ENCODE measurements at regions of chr11 and their contacts with region 1.

Region 1: GRCh38 chr11:19060629-19061028 is at the start of gene MRGPRX2:
- DNase-seq: no peak
- H3K4me3 ChIP-seq: no peak within 1 kb of the TSS
- H3K4me3 Mint-ChIP-seq: peak within 1 kb of the TSS in 6 of 7 donors; percentile 30 to 85 (median 64)
- H3K27ac ChIP-seq: no peak within 1 kb of the TSS
- H3K27ac Mint-ChIP-seq: peak within 1 kb of the TSS; percentile 1 to 82 (median 61)
- H3K4me1 ChIP-seq: peaks cover 19% of the 10 kb centered on the region
- H3K4me1 Mint-ChIP-seq: peaks cover 26 to 40% (median 29%) of the 10 kb centered on the region in 3 donors
- H3K27me3 ChIP-seq: no peaks in the 10 kb centered on the region
- H3K27me3 Mint-ChIP-seq: peaks cover 3 to 5% of the 10 kb centered on the region in 2 donors
- total RNA-seq, gene MRGPRX2: not detected

Region 2: DNA sequence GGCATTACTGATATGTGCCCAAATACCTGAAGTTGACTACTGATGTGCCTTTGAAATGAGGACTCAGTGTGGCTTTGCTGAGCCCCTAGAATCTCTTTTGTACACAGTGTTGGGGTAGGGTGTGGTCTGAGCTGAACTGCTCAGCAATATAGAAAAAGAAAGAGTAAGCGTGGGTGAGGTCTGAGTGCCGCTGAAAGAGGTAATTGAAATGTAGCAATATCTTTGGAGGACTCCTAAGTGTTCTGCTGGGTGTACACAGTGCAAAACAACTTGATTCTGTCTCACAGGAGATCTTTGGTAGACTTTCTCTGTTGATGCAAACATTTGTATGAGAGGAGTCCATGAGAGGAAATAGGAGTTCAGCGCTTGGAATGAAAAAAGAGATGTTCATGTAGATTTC is 195.4 kb before region 1 on chr11:
- CTCF ChIA-PET with region 1: no interaction called
- POLR2A ChIA-PET with region 1: no interaction called
- DNase-seq: no peak
- H3K4me3 ChIP-seq: no peak overlapping the region
- H3K4me3 Mint-ChIP-seq: no peak overlapping the region
- H3K27ac ChIP-seq: no peak overlapping the region
- H3K27ac Mint-ChIP-seq: no peak overlapping the region
- H3K4me1 ChIP-seq: no peaks in the 10 kb centered on the region
- H3K4me1 Mint-ChIP-seq: no peaks in the 10 kb centered on the region
- H3K27me3 ChIP-seq: peaks cover 3% of the 10 kb centered on the region
- H3K27me3 Mint-ChIP-seq: peaks cover 8 to 33% of the 10 kb centered on the region in 2 donors

Region 3: GRCh38 chr11:18890615-18891014 is 170.0 kb before region 1 on chr11:
- CTCF ChIA-PET with region 1: no interaction called
- POLR2A ChIA-PET with region 1: no interaction called
- DNase-seq: no peak
- H3K4me3 ChIP-seq: no peak overlapping the region
- H3K4me3 Mint-ChIP-seq: no peak overlapping the region
- H3K27ac ChIP-seq: no peak overlapping the region
- H3K27ac Mint-ChIP-seq: no peak overlapping the region
- H3K4me1 ChIP-seq: no peaks in the 10 kb centered on the region
- H3K4me1 Mint-ChIP-seq: no peaks in the 10 kb centered on the region
- H3K27me3 ChIP-seq: no peaks in the 10 kb centered on the region
- H3K27me3 Mint-ChIP-seq: peaks cover 6 to 14% of the 10 kb centered on the region in 2 donors

Region 4: GRCh38 chr11:19013181-19013857 is 47.3 kb before region 1 on chr11:
- CTCF ChIA-PET with region 1: no interaction called
- POLR2A ChIA-PET with region 1: no interaction called
- DNase-seq: no peak
- H3K4me3 ChIP-seq: no peak overlapping the region
- H3K4me3 Mint-ChIP-seq: no peak overlapping the region
- H3K27ac ChIP-seq: no peak overlapping the region
- H3K27ac Mint-ChIP-seq: peak overlapping the region in 1 of 8 donors; percentile 10
- H3K4me1 ChIP-seq: no peaks in the 10 kb centered on the region
- H3K4me1 Mint-ChIP-seq: no peaks in the 10 kb centered on the region
- H3K27me3 ChIP-seq: no peaks in the 10 kb centered on the region
- H3K27me3 Mint-ChIP-seq: peaks cover 13 to 45% of the 10 kb centered on the region in 2 donors

Region 5: GRCh38 chr11:19071255-19071654 is 10.6 kb after region 1 on chr11:
- CTCF ChIA-PET with region 1: interaction called, 13 read pairs
- POLR2A ChIA-PET with region 1: no interaction called
- DNase-seq: peak; percentile 24 to 67 (median 36)
- H3K4me3 ChIP-seq: no peak overlapping the region
- H3K4me3 Mint-ChIP-seq: peak overlapping the region in 6 of 7 donors; percentile 3 to 90 (median 48)
- H3K27ac ChIP-seq: no peak overlapping the region
- H3K27ac Mint-ChIP-seq: peak overlapping the region in 3 of 8 donors; percentile 17 to 52 (median 43)
- H3K4me1 ChIP-seq: no peaks in the 10 kb centered on the region
- H3K4me1 Mint-ChIP-seq: peaks cover 5 to 7% (median 5%) of the 10 kb centered on the region in 3 donors
- H3K27me3 ChIP-seq: no peaks in the 10 kb centered on the region
- H3K27me3 Mint-ChIP-seq: peaks cover 10 to 23% of the 10 kb centered on the region in 2 donors

Region 6: GRCh38 chr11:19316434-19316833 is 255.8 kb after region 1 on chr11:
- CTCF ChIA-PET with region 1: no interaction called
- POLR2A ChIA-PET with region 1: no interaction called
- DNase-seq: no peak
- H3K4me3 ChIP-seq: no peak overlapping the region
- H3K4me3 Mint-ChIP-seq: no peak overlapping the region
- H3K27ac ChIP-seq: no peak overlapping the region
- H3K27ac Mint-ChIP-seq: no peak overlapping the region
- H3K4me1 ChIP-seq: no peaks in the 10 kb centered on the region
- H3K4me1 Mint-ChIP-seq: peaks cover 2 to 6% (median 3%) of the 10 kb centered on the region in 3 donors
- H3K27me3 ChIP-seq: no peaks in the 10 kb centered on the region
- H3K27me3 Mint-ChIP-seq: peaks cover 12 to 30% of the 10 kb centered on the region in 2 donors

Measured in CD8-positive, alpha-beta memory T cell (primary cell).